ENCODE measurements at regions of chr4 and their contacts with region 1.

Region 1: DNA sequence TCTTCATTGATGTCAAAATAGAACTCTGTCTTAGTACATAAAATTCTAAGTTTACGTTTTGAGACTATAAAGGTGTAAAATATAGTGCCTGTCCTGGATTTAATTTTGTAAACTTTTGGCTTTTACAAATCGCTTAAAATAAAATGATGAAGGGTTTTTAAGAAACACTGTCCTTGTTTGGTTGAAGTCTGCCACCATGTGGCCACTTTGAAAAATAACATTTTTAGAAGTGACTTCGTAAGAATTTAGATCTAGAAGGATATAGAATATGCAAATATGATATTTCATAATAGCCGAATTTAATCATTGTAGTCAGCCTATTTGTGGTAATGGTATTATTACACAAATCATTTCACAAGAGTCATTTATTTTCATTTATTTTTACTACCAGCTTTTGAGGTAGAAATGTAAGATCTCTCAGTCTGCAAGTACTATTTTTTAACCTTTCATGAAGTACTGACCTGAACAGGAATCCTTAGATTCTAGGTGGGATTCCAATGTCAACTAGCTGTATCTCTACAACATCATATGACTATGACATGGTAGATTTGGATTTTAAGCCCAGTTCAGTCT is 31.0 kb upstream of the FAT4 start:
- DNase-seq: no peak
- H3K4me3 ChIP-seq: no peak overlapping the region
- H3K27ac ChIP-seq: no peak overlapping the region
- H3K4me1 ChIP-seq: no peaks in the 10 kb centered on the region
- H3K27me3 ChIP-seq: no peaks in the 10 kb centered on the region
- CTCF ChIP-seq: peak; percentile 45

Region 2: GRCh38 chr4:124334119-124334518 is 949.7 kb before region 1 on chr4:
- intact Hi-C with region 1: loop called (anchors 5 kb)
- DNase-seq: peak; percentile 28
- H3K4me3 ChIP-seq: no peak overlapping the region
- H3K27ac ChIP-seq: no peak overlapping the region
- H3K4me1 ChIP-seq: no peaks in the 10 kb centered on the region
- H3K27me3 ChIP-seq: no peaks in the 10 kb centered on the region
- CTCF ChIP-seq: peak; percentile 45

Region 3: DNA sequence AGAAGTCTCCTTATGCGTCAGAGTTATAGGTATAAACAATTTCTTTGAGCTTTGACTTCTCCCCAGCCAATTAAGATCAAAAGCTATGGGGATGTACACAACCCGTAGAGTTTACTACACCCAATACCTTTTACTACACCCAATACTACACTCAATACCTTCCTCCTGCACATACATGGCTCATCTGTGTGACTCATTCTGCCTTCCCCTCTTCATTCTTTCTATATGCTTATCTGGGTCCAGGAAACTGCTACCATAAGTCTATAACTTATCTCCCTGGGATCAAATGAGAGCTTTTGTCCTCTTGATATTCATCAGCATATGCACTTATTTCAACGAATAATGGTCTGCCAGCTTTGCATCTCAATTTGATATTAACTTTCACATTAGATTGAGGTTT is 599.5 kb before region 1 on chr4:
- intact Hi-C with region 1: no loop called
- DNase-seq: no peak
- H3K4me3 ChIP-seq: no peak overlapping the region
- H3K27ac ChIP-seq: no peak overlapping the region
- H3K4me1 ChIP-seq: no peaks in the 10 kb centered on the region
- H3K27me3 ChIP-seq: no peaks in the 10 kb centered on the region
- CTCF ChIP-seq: no peak